ENCODE measurements at regions of chr3 and their contacts with region 1.

Region 1: GRCh38 chr3:177359593-177360357 is 162.5 kb upstream of the TBL1XR1 start:
- DNase-seq: peak; percentile 98 to 99 (median 99)
- H3K4me3 ChIP-seq: peak overlapping the region; percentile 56 to 74 (median 59)
- H3K27ac ChIP-seq: peak overlapping the region; percentile 92 to 96
- H3K4me1 ChIP-seq: peaks cover 11 to 51% (median 33%) of the 10 kb centered on the region in 3 donors
- H3K27me3 ChIP-seq: no peaks in the 10 kb centered on the region
- CTCF ChIP-seq: peak; percentile 3

Region 2: GRCh38 chr3:177069514-177070329 is 290.1 kb before region 1 on chr3:
- intact Hi-C with region 1: loop called (anchors 10 kb)
- DNase-seq: no peak
- H3K4me3 ChIP-seq: no peak overlapping the region
- H3K27ac ChIP-seq: no peak overlapping the region
- H3K4me1 ChIP-seq: peaks cover 0 to 4% (median 0%) of the 10 kb centered on the region in 3 donors
- H3K27me3 ChIP-seq: no peaks in the 10 kb centered on the region
- CTCF ChIP-seq: no peak